ENCODE measurements at regions of chr1 and their contacts with region 1.

Region 1: DNA sequence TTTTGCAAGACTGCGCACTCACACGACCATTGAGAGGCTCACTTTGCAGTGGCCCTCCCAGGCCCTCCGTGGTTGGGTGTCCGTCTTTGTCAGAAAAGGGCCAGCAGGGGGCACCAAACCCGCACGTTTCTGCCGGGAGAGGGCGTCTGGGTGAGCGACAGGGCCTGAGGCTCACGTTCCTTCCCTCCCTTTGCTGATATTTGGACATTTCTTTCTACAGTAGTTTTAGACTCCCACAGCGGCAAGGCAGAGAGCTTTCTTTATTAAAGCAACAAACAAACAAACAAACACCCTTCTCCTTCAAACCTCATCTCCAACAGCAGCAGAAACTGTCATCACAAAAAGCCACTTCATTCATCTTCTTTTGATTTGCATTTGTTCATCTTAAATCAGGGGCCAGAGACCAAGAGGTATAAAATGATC is 79.2 kb upstream of the WDR26 start:
- DNase-seq: peak; percentile 44 to 87 (median 79)
- ATAC-seq: peak; percentile 79 to 93 (median 90)
- H3K4me3 ChIP-seq: no peak overlapping the region
- H3K4me3 Mint-ChIP-seq: no peak overlapping the region
- H3K27ac ChIP-seq: no peak overlapping the region
- H3K27ac Mint-ChIP-seq: peak overlapping the region in 1 of 2 donors; percentile 4
- H3K4me1 ChIP-seq: peaks cover 0 to 5% of the 10 kb centered on the region in 2 experiments
- H3K4me1 Mint-ChIP-seq: peaks cover 7 to 9% (median 9%) of the 10 kb centered on the region in 3 donors
- H3K27me3 ChIP-seq: no peaks in the 10 kb centered on the region
- H3K27me3 Mint-ChIP-seq: no peaks in the 10 kb centered on the region

Region 2: DNA sequence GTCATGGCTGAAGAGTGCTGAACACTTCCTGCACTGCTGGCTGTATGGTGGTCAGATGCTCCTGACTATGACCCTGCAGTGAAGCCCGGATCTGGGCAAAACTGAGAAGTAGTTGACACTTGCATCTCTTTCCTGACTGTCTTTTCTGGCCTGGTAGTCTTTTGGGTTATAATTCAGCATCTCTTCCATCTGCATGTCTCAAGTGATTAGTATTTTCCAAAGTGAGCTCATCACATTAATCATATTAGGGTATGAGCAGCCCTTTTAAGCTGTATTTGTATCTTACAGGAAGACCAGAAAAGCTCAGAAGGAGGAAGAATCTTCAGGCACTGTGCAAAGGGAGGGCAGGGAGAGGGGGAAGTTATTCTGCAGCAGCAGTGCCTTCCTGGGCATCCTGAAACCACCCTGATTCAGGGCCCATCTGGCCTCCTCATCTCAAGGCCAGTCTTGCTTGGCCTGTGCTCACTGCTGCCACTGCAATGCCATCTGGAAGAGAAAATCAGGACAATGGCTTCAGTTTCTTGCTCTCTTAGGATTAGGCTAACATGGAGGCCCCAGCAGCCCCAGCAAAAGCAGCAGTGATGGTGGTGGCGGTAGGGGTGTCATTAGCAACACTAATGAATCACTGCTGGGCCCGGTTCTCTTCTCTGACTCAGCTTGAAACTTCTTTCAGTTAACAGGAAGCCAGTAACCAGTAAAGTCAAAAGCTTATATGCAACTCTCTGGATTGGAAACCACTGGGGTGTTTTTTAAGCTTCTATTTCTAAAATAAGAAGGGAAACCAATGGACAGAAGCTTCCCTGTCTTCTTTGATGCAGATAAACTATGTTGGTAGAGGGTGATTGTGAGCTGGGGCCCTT is 15.9 kb before region 1 on chr1:
- CTCF ChIA-PET with region 1: interaction called, 3 to 13 read pairs
- POLR2A ChIA-PET with region 1: no interaction called
- DNase-seq: peak in 25 of 35 experiments; percentile 4 to 41 (median 20)
- ATAC-seq: peak; percentile 67 to 94 (median 88)
- H3K4me3 ChIP-seq: no peak overlapping the region
- H3K4me3 Mint-ChIP-seq: peak overlapping the region in 2 of 3 donors; percentile 14 to 30
- H3K27ac ChIP-seq: peak overlapping the region; percentile 43
- H3K27ac Mint-ChIP-seq: peak overlapping the region; percentile 72 to 73
- H3K4me1 ChIP-seq: peaks cover 0 to 18% of the 10 kb centered on the region in 2 experiments
- H3K4me1 Mint-ChIP-seq: peaks cover 23 to 34% (median 28%) of the 10 kb centered on the region in 3 donors
- H3K27me3 ChIP-seq: no peaks in the 10 kb centered on the region
- H3K27me3 Mint-ChIP-seq: peaks cover 0 to 3% of the 10 kb centered on the region in 2 donors

Region 3: DNA sequence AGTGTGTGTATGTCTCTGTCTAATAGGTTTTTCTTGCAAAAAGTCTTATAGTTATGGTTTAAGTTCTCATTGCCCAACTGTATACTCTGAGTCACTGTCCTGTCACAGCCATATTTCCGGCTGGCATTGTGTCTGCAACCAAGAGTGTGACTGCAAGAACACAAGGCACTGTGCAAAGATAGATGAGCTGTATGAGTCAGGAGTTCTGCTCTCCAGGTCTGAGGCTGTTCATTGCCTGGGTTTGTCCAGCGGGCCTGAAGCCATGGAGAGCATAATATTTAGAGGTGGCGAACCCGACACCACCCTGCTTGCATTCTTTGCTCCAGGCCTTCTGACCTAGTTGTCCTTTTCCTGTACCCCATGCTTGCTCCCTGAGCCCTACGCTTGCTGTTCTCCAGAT is 51.4 kb after region 1 on chr1:
- CTCF ChIA-PET with region 1: no interaction called
- POLR2A ChIA-PET with region 1: no interaction called
- DNase-seq: no peak
- ATAC-seq: no peak
- H3K4me3 ChIP-seq: no peak overlapping the region
- H3K4me3 Mint-ChIP-seq: no peak overlapping the region
- H3K27ac ChIP-seq: no peak overlapping the region
- H3K27ac Mint-ChIP-seq: no peak overlapping the region
- H3K4me1 ChIP-seq: no peaks in the 10 kb centered on the region
- H3K4me1 Mint-ChIP-seq: no peaks in the 10 kb centered on the region
- H3K27me3 ChIP-seq: no peaks in the 10 kb centered on the region
- H3K27me3 Mint-ChIP-seq: no peaks in the 10 kb centered on the region

Region 4: DNA sequence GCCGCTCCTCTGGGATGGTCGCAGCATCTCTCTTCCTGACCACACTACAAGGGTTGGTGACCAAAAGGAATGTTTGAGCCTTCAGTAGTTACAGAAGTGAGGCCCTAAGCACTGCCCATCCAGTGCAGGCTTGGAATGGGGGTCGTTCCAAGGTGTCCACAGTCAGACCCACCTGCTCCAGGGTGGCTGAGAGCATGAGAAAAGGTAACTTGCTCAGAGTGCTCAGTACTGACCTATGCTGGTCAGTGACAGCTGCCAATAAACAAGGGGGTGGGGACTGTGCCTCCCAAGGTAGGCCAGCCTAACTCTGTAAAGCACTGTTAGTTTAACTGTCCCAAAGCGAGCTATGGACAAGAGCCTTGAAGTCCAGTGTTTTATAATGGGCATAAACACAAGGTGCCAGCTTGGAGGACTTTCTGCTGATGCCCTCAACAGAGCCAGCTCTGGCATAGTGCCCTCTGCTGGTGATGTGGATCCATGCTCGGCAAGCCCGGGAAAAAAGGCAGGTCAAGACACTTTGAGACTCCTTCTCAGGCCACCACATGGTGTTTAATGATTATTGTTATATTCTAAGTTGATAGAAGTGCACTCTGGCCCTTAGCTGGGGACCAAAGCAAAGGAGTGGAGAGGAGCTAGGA is 337.5 kb after region 1 on chr1:
- CTCF ChIA-PET with region 1: interaction called, 11 to 16 read pairs
- POLR2A ChIA-PET with region 1: no interaction called
- DNase-seq: peak in 30 of 35 experiments; percentile 4 to 61 (median 24)
- ATAC-seq: no peak
- H3K4me3 ChIP-seq: no peak overlapping the region
- H3K4me3 Mint-ChIP-seq: no peak overlapping the region
- H3K27ac ChIP-seq: no peak overlapping the region
- H3K27ac Mint-ChIP-seq: no peak overlapping the region
- H3K4me1 ChIP-seq: no peaks in the 10 kb centered on the region
- H3K4me1 Mint-ChIP-seq: no peaks in the 10 kb centered on the region
- H3K27me3 ChIP-seq: peaks cover 0 to 16% of the 10 kb centered on the region in 2 experiments
- H3K27me3 Mint-ChIP-seq: peaks cover 3 to 4% of the 10 kb centered on the region in 2 donors

Region 5: GRCh38 chr1:224922404-224923164 is 408.8 kb after region 1 on chr1:
- CTCF ChIA-PET with region 1: interaction called, 40 to 53 read pairs
- POLR2A ChIA-PET with region 1: no interaction called
- DNase-seq: peak in 1 of 35 experiments; percentile 31
- ATAC-seq: peak in 1 of 4 experiments; percentile 33
- H3K4me3 ChIP-seq: no peak overlapping the region
- H3K4me3 Mint-ChIP-seq: no peak overlapping the region
- H3K27ac ChIP-seq: no peak overlapping the region
- H3K27ac Mint-ChIP-seq: no peak overlapping the region
- H3K4me1 ChIP-seq: no peaks in the 10 kb centered on the region
- H3K4me1 Mint-ChIP-seq: no peaks in the 10 kb centered on the region
- H3K27me3 ChIP-seq: peaks cover 0 to 5% of the 10 kb centered on the region in 2 experiments
- H3K27me3 Mint-ChIP-seq: peaks cover 8 to 11% of the 10 kb centered on the region in 2 donors